Posterior vena cava (tissue), 2 donors: ENCODE measurements at regions of chr15 and their contacts with region 1.

Region 1: GRCh38 chr15:34147371-34148140 is 45.7 kb downstream of the PGBD4 start:
- DNase-seq: no peak

Region 2: GRCh38 chr15:34079904-34080303 is 67.7 kb before region 1 on chr15:
- intact Hi-C with region 1: loop called in 1 of 2 experiments (anchors 2 kb)
- DNase-seq: no peak